Cardiac septum (tissue), 1 donor: ENCODE measurements at regions of chr10 and their contacts with region 1.

Region 1: GRCh38 chr10:34666008-34666705 is 148.9 kb downstream of the PARD3 start:
- DNase-seq: no peak

Region 2: DNA sequence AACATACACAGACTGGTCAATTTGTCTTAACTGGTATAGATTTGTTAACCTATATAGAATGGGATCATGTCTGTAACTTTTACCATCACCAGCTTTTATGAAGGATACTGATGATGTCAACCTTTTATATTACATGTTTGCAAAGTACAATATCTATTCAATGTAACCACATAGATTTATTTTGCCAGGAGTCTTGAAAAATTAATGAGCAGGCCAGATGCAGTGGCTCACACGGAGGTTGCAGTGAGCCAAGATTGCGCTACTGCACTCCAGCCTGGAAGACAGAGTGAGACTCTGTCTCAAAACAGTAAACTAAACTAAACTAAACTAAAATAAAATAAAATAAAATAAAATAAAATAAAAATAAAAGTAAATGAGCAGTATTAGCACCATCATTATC is 178.9 kb after region 1 on chr10:
- intact Hi-C with region 1: no loop called
- DNase-seq: no peak

Region 3: DNA sequence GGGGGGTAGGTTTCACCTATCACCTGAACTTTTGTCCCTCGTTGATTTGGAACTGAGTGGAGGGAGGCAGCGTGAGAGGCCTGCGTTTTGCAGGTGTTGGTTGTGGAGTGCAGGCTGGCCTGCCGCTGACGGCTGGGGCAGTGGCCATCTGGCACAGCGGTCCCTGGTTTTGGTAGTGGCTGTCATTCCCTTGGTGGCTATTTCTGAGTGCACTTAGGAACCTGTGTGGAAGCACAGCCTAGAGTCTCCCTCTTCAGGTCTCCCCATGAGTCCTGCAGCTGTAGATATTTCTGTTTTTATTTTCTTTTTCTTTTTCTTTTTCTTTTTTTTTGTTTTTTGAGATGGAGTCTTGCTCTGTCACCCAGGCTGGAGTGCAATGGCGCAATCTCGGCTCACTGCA is 294.8 kb after region 1 on chr10:
- intact Hi-C with region 1: loop called (anchors 10 kb)
- DNase-seq: no peak

Region 4: DNA sequence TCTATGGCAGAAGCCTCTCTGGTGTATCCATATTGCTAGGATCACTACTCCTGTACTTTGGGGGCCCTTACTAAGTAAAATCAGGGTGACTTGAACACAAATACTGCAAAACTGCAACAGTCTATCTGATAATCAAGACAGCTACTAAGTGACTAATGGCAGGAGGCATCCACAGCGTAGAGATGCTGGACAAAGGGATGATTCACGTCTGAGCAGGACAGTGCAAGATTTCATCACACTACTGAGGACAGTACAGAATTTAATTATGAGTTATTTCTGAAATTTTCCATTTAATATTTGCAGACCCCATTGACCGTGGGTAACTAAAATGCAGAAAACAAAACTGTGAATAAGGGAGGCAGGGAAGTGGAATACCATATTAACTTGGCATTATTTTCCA is 413.6 kb after region 1 on chr10:
- intact Hi-C with region 1: no loop called
- DNase-seq: no peak